ENCODE measurements at regions of chr16 and their contacts with region 1.

Region 1: GRCh38 chr16:27268376-27269299 is at the start of gene NSMCE1:
- DNase-seq: peak; percentile 97 to 100
- H3K4me3 ChIP-seq: peak within 1 kb of the TSS; percentile 71
- CTCF ChIP-seq: no peak
- POLR2A ChIP-seq: peak in 1 of 2 donors; percentile 5
- total RNA-seq, gene NSMCE1: 17.3 to 29.2 (median 21.1) TPM

Region 2: GRCh38 chr16:27313422-27314160 is 45.0 kb after region 1 on chr16 and contains the start of gene IL4R:
- intact Hi-C with region 1: loop called (anchors 5 kb)
- DNase-seq: peak; percentile 46 to 94
- H3K4me3 ChIP-seq: peak within 1 kb of the TSS; percentile 76
- CTCF ChIP-seq: no peak
- POLR2A ChIP-seq: no peak
- total RNA-seq, gene IL4R: 22.3 to 35.0 (median 25.1) TPM

Region 3: GRCh38 chr16:27529962-27530361 is 261.3 kb after region 1 on chr16:
- intact Hi-C with region 1: no loop called
- DNase-seq: no peak
- H3K4me3 ChIP-seq: no peak overlapping the region
- CTCF ChIP-seq: no peak
- POLR2A ChIP-seq: no peak

Measured in lower leg skin (tissue), 4 donors.